Calu3 (cell line): ENCODE measurements at regions of chr3 and their contacts with region 1.

Region 1: GRCh38 chr3:141526709-141527108 is 39.9 kb downstream of the RASA2 start:
- DNase-seq: no peak
- H3K4me3 Mint-ChIP-seq: no peak overlapping the region
- H3K27ac Mint-ChIP-seq: no peak overlapping the region
- H3K4me1 Mint-ChIP-seq: peaks cover 27% of the 10 kb centered on the region
- H3K27me3 Mint-ChIP-seq: no peaks in the 10 kb centered on the region
- CTCF ChIP-seq: no peak

Region 2: GRCh38 chr3:141498598-141499223 is 28.0 kb before region 1 on chr3:
- CTCF ChIA-PET with region 1: no interaction called
- intact Hi-C with region 1: loop called (anchors 2 kb)
- DNase-seq: no peak
- H3K4me3 Mint-ChIP-seq: no peak overlapping the region
- H3K27ac Mint-ChIP-seq: no peak overlapping the region
- H3K4me1 Mint-ChIP-seq: no peaks in the 10 kb centered on the region
- H3K27me3 Mint-ChIP-seq: no peaks in the 10 kb centered on the region
- CTCF ChIP-seq: no peak

Region 3: DNA sequence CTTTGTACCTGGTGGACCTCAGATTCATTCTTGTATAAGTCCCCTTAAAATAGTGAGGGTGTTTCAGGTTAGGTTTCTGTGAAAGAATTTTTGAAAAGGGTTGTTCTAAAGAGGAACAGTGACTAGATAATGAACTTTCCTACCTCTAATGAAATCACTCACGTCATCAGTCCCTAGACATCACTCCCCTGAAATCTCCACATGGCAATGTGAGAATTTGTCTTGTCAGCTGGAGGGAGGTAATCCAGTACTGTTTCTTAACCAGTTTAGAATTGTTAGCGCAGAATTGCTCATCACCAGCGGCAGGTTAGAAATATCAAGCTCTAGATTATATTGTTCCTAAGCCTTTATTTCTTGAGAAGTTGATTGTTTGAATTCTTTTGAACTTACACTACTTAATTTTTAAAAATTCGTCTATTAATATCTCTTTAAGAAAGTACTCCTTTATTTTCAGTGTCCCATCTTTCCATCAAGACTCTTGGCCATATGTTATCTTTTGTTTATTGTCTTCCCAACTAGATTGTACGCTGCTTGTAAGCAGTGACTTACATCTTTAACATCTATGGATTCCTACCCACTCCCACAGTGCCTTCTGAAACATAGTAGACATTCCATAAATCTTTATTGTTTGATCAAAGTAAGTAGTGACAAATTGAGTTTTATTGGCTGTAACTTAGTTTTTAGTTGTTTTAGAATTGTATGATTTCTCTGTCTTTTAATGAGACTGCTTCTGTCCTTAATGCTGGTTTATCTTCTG is 12.9 kb after region 1 on chr3:
- CTCF ChIA-PET with region 1: no interaction called
- intact Hi-C with region 1: loop called (anchors 2 kb)
- DNase-seq: no peak
- H3K4me3 Mint-ChIP-seq: no peak overlapping the region
- H3K27ac Mint-ChIP-seq: peak overlapping the region; percentile 30
- H3K4me1 Mint-ChIP-seq: peaks cover 39% of the 10 kb centered on the region
- H3K27me3 Mint-ChIP-seq: no peaks in the 10 kb centered on the region
- CTCF ChIP-seq: no peak